PC-9 (cell line): ENCODE measurements at regions of chr5 and their contacts with region 1.

Region 1: GRCh38 chr5:115377468-115378217 is 81.2 kb upstream of the CCDC112 start:
- DNase-seq: peak in 1 of 2 experiments; percentile 81
- H3K4me3 ChIP-seq: no peak overlapping the region
- H3K27ac ChIP-seq: peak overlapping the region; percentile 94
- H3K4me1 ChIP-seq: peaks cover 51% of the 10 kb centered on the region
- H3K27me3 ChIP-seq: no peaks in the 10 kb centered on the region
- CTCF ChIP-seq: no peak

Region 2: GRCh38 chr5:115349020-115349817 is 28.4 kb before region 1 on chr5:
- CTCF ChIA-PET with region 1: no interaction called
- POLR2A ChIA-PET with region 1: no interaction called
- intact Hi-C with region 1: loop called (anchors 2 kb)
- DNase-seq: peak; percentile 21 to 79
- H3K4me3 ChIP-seq: peak overlapping the region; percentile 1; the same call in 1 of the 2 replicates
- H3K27ac ChIP-seq: peak overlapping the region; percentile 91
- H3K4me1 ChIP-seq: peaks cover 54% of the 10 kb centered on the region
- H3K27me3 ChIP-seq: no peaks in the 10 kb centered on the region
- CTCF ChIP-seq: no peak

Region 3: DNA sequence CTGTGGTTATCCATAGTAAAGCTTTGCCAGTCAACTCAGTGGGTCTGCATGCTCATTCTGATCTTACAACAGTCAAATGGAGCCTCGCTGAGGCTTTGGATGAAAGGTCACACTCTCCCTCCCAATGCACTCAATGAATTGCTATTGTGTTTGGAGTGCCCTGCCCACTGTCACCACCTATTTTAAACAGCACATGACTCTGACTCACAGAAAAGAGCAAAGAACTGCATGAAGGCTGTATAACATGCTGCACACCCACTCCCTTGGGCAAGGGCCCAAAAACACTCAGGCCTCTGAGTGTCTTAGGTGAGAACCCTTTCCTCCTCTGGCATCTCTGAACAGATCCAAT is 37.5 kb after region 1 on chr5:
- CTCF ChIA-PET with region 1: no interaction called
- POLR2A ChIA-PET with region 1: no interaction called
- intact Hi-C with region 1: loop called (anchors 5 kb)
- DNase-seq: peak; percentile 56 to 88
- H3K4me3 ChIP-seq: no peak overlapping the region
- H3K27ac ChIP-seq: peak overlapping the region; percentile 69
- H3K4me1 ChIP-seq: peaks cover 36% of the 10 kb centered on the region
- H3K27me3 ChIP-seq: no peaks in the 10 kb centered on the region
- CTCF ChIP-seq: no peak

Region 4: DNA sequence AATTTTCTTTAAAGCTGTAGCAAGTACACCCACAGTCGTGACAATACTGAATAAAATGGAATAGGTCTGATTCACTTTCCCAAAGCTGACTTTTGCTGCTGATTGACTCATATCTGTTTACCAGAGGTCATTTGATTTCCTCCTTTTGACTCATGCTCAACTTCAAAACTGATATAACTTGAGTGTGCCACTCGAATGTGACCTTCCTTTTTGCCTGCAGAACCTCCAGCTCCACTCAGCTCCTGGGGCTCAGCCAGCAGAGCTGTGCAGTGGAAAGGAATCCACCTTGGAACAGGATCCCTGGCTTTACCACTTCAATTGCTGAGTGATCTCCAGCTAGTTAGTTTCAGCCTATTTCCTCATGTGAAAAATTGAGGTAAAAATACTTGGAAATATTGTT is 82.8 kb after region 1 on chr5:
- CTCF ChIA-PET with region 1: no interaction called
- POLR2A ChIA-PET with region 1: interaction called, 4 read pairs
- intact Hi-C with region 1: loop called (anchors 2 kb)
- DNase-seq: peak; percentile 69 to 93
- H3K4me3 ChIP-seq: 0 out of 2 replicates have a peak overlapping the region, but pooled peaks have one; percentile 8
- H3K27ac ChIP-seq: peak overlapping the region; percentile 94
- H3K4me1 ChIP-seq: peaks cover 55% of the 10 kb centered on the region
- H3K27me3 ChIP-seq: no peaks in the 10 kb centered on the region
- CTCF ChIP-seq: no peak

Region 5: DNA sequence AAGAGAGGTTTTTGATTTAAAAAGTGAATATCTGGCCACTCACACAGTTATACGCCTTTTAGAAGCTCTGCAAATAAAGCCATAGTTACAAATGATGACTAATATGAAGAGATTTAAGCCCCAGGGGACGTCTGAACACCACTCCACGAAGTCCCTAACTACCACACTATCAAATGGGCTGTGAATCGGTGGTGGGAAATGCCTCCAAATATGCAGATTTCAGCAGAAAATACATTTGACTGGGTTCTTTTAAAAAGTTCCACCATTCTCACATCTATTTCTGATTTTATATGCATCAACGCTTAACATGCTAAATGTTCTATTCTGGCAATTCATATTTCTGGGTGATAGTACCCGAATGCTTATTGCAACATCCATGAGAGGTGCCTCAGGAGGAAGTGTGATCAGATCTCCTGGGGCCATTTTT is 202.1 kb after region 1 on chr5:
- CTCF ChIA-PET with region 1: interaction called, 8 read pairs
- POLR2A ChIA-PET with region 1: no interaction called
- intact Hi-C with region 1: loop called (anchors 2 kb)
- DNase-seq: no peak
- H3K4me3 ChIP-seq: no peak overlapping the region
- H3K27ac ChIP-seq: no peak overlapping the region
- H3K4me1 ChIP-seq: peaks cover 17% of the 10 kb centered on the region; the same call in 1 of the 2 replicates
- H3K27me3 ChIP-seq: no peaks in the 10 kb centered on the region
- CTCF ChIP-seq: no peak

Region 6: GRCh38 chr5:115709585-115709984 is 331.9 kb after region 1 on chr5:
- CTCF ChIA-PET with region 1: no interaction called
- POLR2A ChIA-PET with region 1: no interaction called
- intact Hi-C with region 1: no loop called
- DNase-seq: no peak
- H3K4me3 ChIP-seq: no peak overlapping the region
- H3K27ac ChIP-seq: no peak overlapping the region
- H3K4me1 ChIP-seq: no peaks in the 10 kb centered on the region
- H3K27me3 ChIP-seq: no peaks in the 10 kb centered on the region
- CTCF ChIP-seq: no peak